Activated T-helper 1 cell treated with anti-CD3 and anti-CD28 coated beads, Interleukin-12 subunit alpha, Interleukin-12 subunit beta, Interleukin-2, Interleukin-4 antibody, amounts not matched to agents 30 ng/mL and 10 ng/mL and 1 ng/mL, durations not matched to agents 14 hours and 24 hours and 36 hours (primary cell): ENCODE measurements at regions of chr6 and their contacts with region 1.

Region 1: GRCh38 chr6:128725271-128726233 is 157.4 kb upstream of the LAMA2 start:
- DNase-seq: no peak
- H3K4me3 Mint-ChIP-seq: no peak overlapping the region
- H3K27ac Mint-ChIP-seq: no peak overlapping the region
- H3K4me1 Mint-ChIP-seq: no peaks in the 10 kb centered on the region
- H3K27me3 Mint-ChIP-seq: no peaks in the 10 kb centered on the region

Region 2: DNA sequence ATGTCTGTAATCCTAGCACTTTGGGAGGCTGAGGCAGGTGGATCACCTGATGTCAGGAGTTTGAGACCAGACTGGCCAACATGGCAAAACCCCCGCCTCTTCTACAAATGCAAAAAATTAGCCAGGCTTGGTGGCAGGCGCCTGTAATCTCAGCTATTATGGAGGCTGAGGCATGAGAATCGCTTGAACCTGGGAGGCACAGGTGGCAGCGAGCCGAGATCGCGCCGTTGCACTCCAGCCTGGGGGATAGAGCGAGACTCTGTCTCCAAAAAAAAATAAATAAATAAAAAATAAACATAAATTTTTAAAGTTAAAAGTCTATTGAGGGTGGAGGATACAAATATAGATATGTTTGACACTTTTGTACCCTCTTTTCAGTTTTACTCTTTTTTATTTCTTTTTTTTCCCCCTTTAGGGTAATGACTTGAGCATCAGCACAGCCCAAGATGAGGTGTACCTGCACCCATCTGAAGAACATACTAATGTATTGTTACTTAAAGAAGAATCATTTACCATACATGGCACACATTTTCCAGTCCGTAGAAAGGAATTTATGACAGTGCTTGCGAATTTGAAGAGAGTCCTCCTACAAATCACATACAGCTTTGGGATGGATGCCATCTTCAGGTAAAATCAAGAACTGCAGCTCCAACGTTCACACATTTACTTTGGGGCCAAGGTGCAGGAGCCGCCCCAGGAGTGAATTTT is 526.3 kb after region 1 on chr6:
- intact Hi-C with region 1: loop called (anchors 1 kb)
- DNase-seq: peak; percentile 27
- H3K4me3 Mint-ChIP-seq: no peak overlapping the region
- H3K27ac Mint-ChIP-seq: no peak overlapping the region
- H3K4me1 Mint-ChIP-seq: peaks cover 19% of the 10 kb centered on the region
- H3K27me3 Mint-ChIP-seq: peaks cover 37% of the 10 kb centered on the region

Region 3: DNA sequence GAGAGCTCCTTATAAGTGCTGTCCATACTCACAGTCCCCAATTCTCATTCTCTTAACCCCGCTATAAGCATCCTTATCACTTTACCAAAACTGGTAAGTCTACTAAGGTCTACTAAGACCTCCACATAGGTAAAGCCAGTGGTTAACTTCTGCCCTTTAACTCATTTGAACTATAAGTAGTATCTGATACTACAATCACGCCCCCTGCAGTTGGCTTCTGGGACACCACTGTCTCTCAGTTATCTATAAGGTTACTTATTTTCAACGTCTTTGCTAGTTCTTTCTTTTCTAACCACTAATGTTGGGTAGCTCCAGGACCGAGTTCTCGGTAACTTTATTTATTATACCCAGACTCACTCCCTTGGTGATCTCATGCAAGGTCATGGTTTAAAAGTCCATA is 841.8 kb after region 1 on chr6:
- intact Hi-C with region 1: loop called (anchors 2 kb)
- DNase-seq: peak; percentile 9
- H3K4me3 Mint-ChIP-seq: no peak overlapping the region
- H3K27ac Mint-ChIP-seq: no peak overlapping the region
- H3K4me1 Mint-ChIP-seq: no peaks in the 10 kb centered on the region
- H3K27me3 Mint-ChIP-seq: peaks cover 14% of the 10 kb centered on the region